Endothelial cell of umbilical vein (primary cell): ENCODE measurements at regions of chr6 and their contacts with region 1.

Region 1: DNA sequence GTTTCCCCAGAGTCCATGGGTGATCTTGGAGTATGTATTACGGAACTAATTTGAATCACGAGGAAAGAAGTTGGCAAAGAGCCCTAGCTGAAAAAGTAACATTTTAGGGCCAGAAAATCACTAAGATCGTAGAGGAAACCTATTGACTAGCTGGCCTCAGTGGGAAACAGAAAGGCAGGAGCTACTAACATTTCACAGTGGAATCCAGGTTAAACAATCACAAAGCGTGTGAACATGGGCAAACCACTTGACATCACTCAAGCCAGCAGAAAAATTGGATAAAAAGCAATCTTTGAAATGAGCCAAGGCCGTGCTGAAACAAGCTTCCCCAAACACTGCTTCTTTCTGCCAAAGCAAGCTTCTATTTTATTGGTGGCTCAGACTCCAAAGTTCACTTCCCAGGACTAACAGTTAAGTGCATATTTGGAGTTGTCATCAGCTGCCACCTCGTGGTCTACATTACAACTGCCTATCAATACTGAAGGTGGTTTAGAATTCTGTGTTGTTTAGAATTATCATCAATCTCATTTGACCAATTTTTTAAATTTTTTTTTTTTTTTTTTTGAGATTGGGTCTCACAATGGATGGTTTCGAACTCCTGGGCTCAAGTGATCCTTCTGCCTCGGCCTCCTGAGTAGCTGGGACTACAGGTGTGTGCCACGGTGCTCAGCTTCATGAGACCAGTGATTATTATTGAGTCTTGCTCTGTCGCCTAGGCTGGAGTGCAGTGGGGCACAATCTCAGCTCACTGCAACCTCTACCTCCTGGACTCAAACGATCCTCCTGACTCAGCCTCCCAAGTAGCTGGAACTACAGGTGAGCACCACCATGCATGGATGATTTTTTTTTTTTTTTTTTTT is 10.6 kb downstream of the RPS10 start:
- DNase-seq: peak; percentile 77
- H3K4me3 ChIP-seq: no peak overlapping the region
- H3K27ac ChIP-seq: no peak overlapping the region
- H3K4me1 ChIP-seq: no peaks in the 10 kb centered on the region
- H3K27me3 ChIP-seq: no peaks in the 10 kb centered on the region
- CTCF ChIP-seq: peak; percentile 55 to 56
- POLR2A ChIP-seq: no peak

Region 2: GRCh38 chr6:34196126-34196830 is 219.0 kb before region 1 on chr6:
- CTCF ChIA-PET with region 1: interaction called, 189 read pairs
- POLR2A ChIA-PET with region 1: interaction called, 6 read pairs
- dilution Hi-C with region 1: no loop called
- intact Hi-C with region 1: loop called (anchors 1 kb)
- DNase-seq: peak; percentile 70
- H3K4me3 ChIP-seq: peak overlapping the region in 2 of 3 experiments; percentile 16 to 26
- H3K27ac ChIP-seq: no peak overlapping the region
- H3K4me1 ChIP-seq: peaks cover 9% of the 10 kb centered on the region
- H3K27me3 ChIP-seq: no peaks in the 10 kb centered on the region
- CTCF ChIP-seq: peak; percentile 96 to 98
- POLR2A ChIP-seq: no peak

Region 3: DNA sequence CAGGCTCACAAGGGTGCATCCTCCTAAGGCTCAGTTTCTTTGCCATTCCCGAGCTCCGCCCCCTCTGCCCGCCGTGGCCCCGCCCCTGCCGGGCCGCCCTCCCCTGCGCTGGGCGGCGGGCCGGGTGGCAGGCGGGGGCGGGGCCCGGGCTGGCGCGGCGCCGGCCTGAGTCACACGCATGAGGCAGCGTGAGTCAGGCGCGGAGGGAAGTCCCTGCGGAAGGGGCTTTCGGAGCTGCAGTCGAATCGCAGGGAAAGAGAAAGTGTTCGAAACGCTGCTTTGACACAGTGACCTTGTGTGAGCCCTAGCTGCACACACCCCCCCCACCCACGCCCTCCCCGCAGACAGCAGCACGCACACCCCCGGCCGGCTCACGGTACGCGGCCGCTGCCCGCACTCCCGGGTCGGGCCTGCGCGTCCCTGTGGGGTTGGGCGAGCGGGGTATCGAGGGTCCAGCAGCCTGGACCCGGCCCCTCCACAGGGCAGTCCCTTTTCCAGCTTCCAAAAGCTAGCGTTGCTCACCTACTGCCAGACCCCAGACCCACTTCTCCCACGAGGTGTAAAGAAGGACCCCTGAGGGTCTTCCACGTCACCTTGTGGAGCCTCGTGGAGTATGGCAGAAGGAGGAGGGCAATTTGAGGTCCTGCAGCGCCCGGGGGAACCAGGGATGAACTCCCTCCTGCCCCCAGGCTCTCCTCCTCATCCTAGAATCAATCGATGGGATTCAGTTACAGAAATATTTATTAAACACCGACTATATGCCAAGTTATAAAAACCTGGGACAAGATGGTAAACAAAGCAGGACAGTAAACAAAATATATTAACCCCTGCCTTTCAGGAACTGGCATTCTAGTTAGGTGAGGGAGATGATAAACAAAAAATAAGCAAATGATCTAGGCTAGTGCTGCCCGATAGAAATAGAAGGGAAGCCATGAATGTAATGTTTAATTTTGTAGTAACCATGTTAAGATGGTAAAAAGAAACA is 191.0 kb before region 1 on chr6:
- CTCF ChIA-PET with region 1: interaction called, 14 read pairs
- POLR2A ChIA-PET with region 1: interaction called, 3 read pairs
- dilution Hi-C with region 1: no loop called
- intact Hi-C with region 1: no loop called
- DNase-seq: peak; percentile 95
- H3K4me3 ChIP-seq: peak overlapping the region; percentile 37 to 69 (median 41)
- H3K27ac ChIP-seq: peak overlapping the region; percentile 99
- H3K4me1 ChIP-seq: peaks cover 16% of the 10 kb centered on the region
- H3K27me3 ChIP-seq: no peaks in the 10 kb centered on the region
- CTCF ChIP-seq: no peak
- POLR2A ChIP-seq: no peak

Region 4: DNA sequence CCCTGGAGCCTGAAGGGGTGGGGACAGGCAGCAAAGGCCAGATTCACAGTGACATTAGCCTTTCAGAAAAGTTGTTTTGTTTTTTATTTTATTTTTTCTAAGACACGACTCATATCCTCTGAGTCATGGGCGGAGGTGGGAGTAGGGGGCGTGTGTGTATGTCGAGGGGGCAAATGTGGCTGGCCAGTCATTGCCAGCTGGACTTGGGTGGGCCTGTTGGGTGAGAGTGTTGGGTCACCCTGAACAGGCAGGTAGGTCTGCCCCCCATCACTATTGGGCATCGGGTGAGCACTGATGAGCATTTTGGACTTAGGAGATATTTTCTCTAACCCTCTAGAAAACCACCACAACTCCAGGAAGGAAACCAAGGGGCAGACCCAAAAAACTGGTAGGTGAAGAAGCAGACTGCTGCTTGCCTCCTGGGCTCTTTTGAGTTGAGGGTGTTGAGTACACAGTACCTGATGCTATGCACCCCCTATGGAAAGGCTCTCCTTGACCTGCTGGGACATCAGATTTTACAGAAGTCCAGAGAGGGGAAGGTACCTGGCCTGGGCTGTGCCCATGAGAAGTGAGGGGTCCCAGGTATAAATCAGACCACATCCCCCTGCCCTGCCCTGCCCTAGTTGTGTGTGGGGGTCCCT is 172.0 kb before region 1 on chr6:
- CTCF ChIA-PET with region 1: interaction called, 278 read pairs
- POLR2A ChIA-PET with region 1: interaction called, 22 read pairs
- dilution Hi-C with region 1: no loop called
- intact Hi-C with region 1: no loop called
- DNase-seq: peak; percentile 89
- H3K4me3 ChIP-seq: peak overlapping the region in 1 of 3 experiments; percentile 22
- H3K27ac ChIP-seq: peak overlapping the region; percentile 88
- H3K4me1 ChIP-seq: peaks cover 80% of the 10 kb centered on the region
- H3K27me3 ChIP-seq: no peaks in the 10 kb centered on the region
- CTCF ChIP-seq: no peak
- POLR2A ChIP-seq: no peak

Region 5: DNA sequence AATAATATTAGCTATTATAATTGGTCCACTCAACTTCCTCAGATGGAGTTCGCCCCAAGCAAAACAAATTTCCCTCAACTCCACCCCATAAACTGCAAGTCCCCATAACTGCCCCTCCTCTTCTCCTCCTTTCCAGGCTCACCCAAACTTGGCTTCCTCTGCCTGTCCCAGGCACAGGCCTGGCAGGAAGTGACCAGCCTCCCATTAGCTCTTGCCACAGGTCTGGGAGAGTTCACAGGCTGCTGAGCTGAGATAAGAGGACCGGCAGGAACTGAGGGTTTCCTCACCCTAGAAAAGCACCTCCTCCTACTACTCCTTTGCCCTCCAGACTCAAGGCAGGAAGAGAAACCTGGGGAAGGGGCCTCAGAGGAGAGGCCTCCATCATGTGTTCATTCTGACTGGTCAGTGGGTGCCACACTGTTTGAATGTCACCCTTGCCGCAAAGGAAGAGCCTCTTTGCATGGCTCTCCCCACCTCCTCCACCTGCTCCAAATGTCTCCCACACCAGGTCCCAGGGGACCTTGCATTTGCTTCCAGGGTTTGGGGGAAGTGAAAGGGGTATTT is 141.9 kb before region 1 on chr6:
- CTCF ChIA-PET with region 1: interaction called, 15 read pairs
- POLR2A ChIA-PET with region 1: interaction called, 3 read pairs
- dilution Hi-C with region 1: no loop called
- intact Hi-C with region 1: no loop called
- DNase-seq: peak; percentile 95
- H3K4me3 ChIP-seq: no peak overlapping the region
- H3K27ac ChIP-seq: peak overlapping the region; percentile 6
- H3K4me1 ChIP-seq: peaks cover 18% of the 10 kb centered on the region
- H3K27me3 ChIP-seq: no peaks in the 10 kb centered on the region
- CTCF ChIP-seq: no peak
- POLR2A ChIP-seq: peak; percentile 75

Region 6: DNA sequence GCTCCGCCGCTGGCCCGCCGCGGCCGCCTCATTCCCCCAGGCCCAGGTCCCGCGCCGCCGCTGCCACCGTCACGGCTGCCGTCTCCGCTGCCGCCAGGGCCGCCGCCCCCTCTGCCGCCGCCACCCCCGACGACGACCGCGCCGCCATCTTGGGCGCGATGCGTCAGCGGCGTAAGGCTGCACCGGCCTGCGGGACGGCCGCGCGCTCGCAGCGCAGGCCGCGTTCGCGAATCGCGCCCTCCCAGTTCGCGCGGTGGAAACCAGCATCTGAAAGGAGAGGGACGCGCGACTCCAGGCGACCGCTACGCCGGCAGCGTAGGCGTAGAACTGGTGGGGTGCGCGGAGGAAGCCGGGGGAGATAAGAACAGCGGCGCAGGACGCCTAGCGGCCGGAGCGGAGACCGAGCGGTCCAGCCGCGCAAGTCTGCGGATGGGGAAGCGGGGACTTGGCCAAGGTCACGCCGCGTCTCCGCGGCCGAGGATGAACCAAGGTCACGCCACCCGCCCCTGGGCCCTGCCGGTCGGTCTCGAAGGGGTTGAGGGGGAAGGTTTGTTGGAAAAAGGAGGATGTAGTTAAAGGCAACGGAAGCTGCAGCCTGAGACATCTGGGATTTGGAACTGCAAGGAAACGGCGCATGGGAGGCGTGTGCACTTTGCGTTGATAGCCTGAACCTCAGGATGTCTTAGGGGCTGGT is 22.6 kb before region 1 on chr6 and contains the start of gene NUDT3:
- CTCF ChIA-PET with region 1: interaction called, 35 read pairs
- POLR2A ChIA-PET with region 1: no interaction called
- dilution Hi-C with region 1: no loop called
- intact Hi-C with region 1: loop called (anchors 2 kb)
- DNase-seq: peak; percentile 96
- H3K4me3 ChIP-seq: peak within 1 kb of the TSS; percentile 84 to 98 (median 96)
- H3K27ac ChIP-seq: peak within 1 kb of the TSS; percentile 27
- H3K4me1 ChIP-seq: peaks cover 11% of the 10 kb centered on the region
- H3K27me3 ChIP-seq: no peaks in the 10 kb centered on the region
- CTCF ChIP-seq: peak; percentile 89 to 95
- POLR2A ChIP-seq: peak; percentile 31
- total RNA-seq, gene NUDT3: 30.9 and 31.7 TPM in 2 replicates

Region 7: GRCh38 chr6:34610819-34611477 is 195.7 kb after region 1 on chr6:
- CTCF ChIA-PET with region 1: interaction called, 27 read pairs
- POLR2A ChIA-PET with region 1: no interaction called
- dilution Hi-C with region 1: no loop called
- intact Hi-C with region 1: no loop called
- DNase-seq: peak; percentile 51
- H3K4me3 ChIP-seq: no peak overlapping the region
- H3K27ac ChIP-seq: peak overlapping the region; percentile 65
- H3K4me1 ChIP-seq: peaks cover 10% of the 10 kb centered on the region
- H3K27me3 ChIP-seq: no peaks in the 10 kb centered on the region
- CTCF ChIP-seq: no peak
- POLR2A ChIP-seq: no peak